G401 (cell line): ENCODE measurements at regions of chr19 and their contacts with region 1.

Region 1: GRCh38 chr19:15248648-15249527 is 16.6 kb upstream of the EPHX3 start:
- DNase-seq: no peak

Region 2: DNA sequence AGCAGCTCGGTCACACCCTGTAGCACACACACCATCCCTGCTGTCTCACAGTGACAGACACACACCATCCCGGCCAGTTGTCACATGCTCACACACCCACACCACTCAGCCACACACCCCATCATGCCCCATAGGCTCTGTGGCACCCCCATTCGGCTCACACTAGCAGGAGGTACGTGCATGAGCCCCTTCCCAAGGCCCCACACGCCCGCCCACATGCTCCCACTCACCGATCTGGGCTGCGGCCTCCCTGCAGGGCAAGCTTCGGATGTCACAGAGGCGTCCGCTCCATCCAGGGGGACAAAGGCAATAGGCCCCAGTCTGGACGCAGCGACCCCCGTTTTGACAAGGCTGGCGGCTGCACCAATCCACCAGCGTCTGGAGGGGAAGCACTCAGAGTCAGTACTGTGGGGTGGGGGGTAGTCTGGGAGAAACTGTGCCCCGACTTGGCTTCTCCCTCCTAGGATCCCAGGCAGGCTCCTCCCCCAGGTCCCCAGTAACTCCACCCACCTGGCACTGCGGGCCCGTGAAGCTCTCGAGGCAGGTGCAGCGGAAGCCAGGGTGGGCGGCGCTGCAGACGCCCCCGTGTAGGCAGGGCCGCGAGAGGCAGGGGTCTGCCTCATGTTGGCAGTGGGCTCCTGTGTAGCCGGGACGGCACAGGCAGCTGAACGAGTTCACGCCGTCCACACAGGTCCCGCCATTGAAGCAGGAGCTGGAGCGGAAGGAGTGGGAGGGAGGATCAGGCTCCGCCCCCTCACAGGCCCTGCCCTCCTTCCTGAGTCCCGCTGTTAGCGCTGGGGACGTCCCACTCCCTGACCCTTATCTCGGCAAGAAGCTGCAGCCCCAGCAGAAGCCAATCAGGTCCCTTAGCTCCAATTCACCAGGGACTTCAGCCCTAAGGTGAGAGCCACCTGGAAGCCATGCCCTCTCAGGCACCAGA is 68.2 kb before region 1 on chr19:
- in situ Hi-C with region 1: no loop called
- DNase-seq: no peak

Region 3: GRCh38 chr19:15292847-15293582 is 44.1 kb after region 1 on chr19:
- in situ Hi-C with region 1: loop called (anchors 5 kb)
- DNase-seq: no peak

Region 4: GRCh38 chr19:15331419-15332310 is 82.8 kb after region 1 on chr19:
- in situ Hi-C with region 1: no loop called
- DNase-seq: no peak